ENCODE measurements at regions of chr10 and their contacts with region 1.

Region 1: GRCh38 chr10:102072673-102073527 is 7.8 kb downstream of the HPS6 start:
- DNase-seq: peak; percentile 85
- ATAC-seq: peak; percentile 95
- H3K4me3 Mint-ChIP-seq: no peak overlapping the region
- H3K27ac Mint-ChIP-seq: no peak overlapping the region
- H3K4me1 Mint-ChIP-seq: no peaks in the 10 kb centered on the region
- H3K27me3 Mint-ChIP-seq: peaks cover 3% of the 10 kb centered on the region
- CTCF ChIP-seq: peak; percentile 94

Region 2: GRCh38 chr10:101848894-101849351 is 224.0 kb before region 1 on chr10:
- CTCF ChIA-PET with region 1: interaction called, 13 read pairs
- POLR2A ChIA-PET with region 1: no interaction called
- DNase-seq: no peak
- ATAC-seq: peak; percentile 62
- H3K4me3 Mint-ChIP-seq: no peak overlapping the region
- H3K27ac Mint-ChIP-seq: peak overlapping the region; percentile 65; the same call in 1 of the 2 replicates
- H3K4me1 Mint-ChIP-seq: peaks cover 33% of the 10 kb centered on the region
- H3K27me3 Mint-ChIP-seq: no peaks in the 10 kb centered on the region
- CTCF ChIP-seq: no peak

Region 3: GRCh38 chr10:102055647-102056419 is 17.1 kb before region 1 on chr10 and contains the start of gene ARMH3:
- CTCF ChIA-PET with region 1: interaction called, 39 read pairs
- POLR2A ChIA-PET with region 1: no interaction called
- DNase-seq: peak; percentile 93
- ATAC-seq: peak; percentile 94
- H3K4me3 Mint-ChIP-seq: peak within 1 kb of the TSS; percentile 95
- H3K27ac Mint-ChIP-seq: peak within 1 kb of the TSS; percentile 95
- H3K4me1 Mint-ChIP-seq: peaks cover 19% of the 10 kb centered on the region
- H3K27me3 Mint-ChIP-seq: no peaks in the 10 kb centered on the region; the same call in none of the 2 replicates
- CTCF ChIP-seq: no peak
- total RNA-seq, gene ARMH3: 16.0 to 17.9 TPM (median 17.1 TPM) in 3 replicates

Region 4: DNA sequence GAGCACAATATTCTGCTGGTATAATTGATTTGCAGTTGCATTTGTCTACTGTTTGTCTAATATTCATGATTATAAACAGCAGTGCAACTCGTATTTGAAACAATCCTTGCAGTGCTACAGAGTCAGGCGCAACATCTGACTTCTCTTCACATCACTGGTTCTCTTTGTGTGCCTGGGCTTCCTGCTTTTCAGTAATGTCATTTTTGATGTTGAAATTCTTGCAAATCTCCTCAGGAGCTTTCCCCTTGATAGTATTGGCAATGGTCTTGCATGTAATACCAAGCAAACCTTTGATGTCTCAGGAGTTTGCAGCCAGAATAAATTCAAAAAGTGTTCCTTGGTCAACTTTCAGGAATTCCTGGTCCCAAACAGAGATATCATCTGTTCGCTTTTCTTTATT is 12.4 kb after region 1 on chr10:
- CTCF ChIA-PET with region 1: interaction called, 23 read pairs
- POLR2A ChIA-PET with region 1: no interaction called
- DNase-seq: no peak
- ATAC-seq: no peak
- H3K4me3 Mint-ChIP-seq: no peak overlapping the region
- H3K27ac Mint-ChIP-seq: no peak overlapping the region
- H3K4me1 Mint-ChIP-seq: peaks cover 2% of the 10 kb centered on the region; the same call in 1 of the 2 replicates
- H3K27me3 Mint-ChIP-seq: no peaks in the 10 kb centered on the region
- CTCF ChIP-seq: no peak

Region 5: GRCh38 chr10:102101152-102101551 is 28.3 kb after region 1 on chr10:
- CTCF ChIA-PET with region 1: interaction called, 13 read pairs
- POLR2A ChIA-PET with region 1: no interaction called
- DNase-seq: no peak
- ATAC-seq: peak; percentile 76
- H3K4me3 Mint-ChIP-seq: no peak overlapping the region
- H3K27ac Mint-ChIP-seq: no peak overlapping the region
- H3K4me1 Mint-ChIP-seq: no peaks in the 10 kb centered on the region
- H3K27me3 Mint-ChIP-seq: no peaks in the 10 kb centered on the region
- CTCF ChIP-seq: no peak

Region 6: DNA sequence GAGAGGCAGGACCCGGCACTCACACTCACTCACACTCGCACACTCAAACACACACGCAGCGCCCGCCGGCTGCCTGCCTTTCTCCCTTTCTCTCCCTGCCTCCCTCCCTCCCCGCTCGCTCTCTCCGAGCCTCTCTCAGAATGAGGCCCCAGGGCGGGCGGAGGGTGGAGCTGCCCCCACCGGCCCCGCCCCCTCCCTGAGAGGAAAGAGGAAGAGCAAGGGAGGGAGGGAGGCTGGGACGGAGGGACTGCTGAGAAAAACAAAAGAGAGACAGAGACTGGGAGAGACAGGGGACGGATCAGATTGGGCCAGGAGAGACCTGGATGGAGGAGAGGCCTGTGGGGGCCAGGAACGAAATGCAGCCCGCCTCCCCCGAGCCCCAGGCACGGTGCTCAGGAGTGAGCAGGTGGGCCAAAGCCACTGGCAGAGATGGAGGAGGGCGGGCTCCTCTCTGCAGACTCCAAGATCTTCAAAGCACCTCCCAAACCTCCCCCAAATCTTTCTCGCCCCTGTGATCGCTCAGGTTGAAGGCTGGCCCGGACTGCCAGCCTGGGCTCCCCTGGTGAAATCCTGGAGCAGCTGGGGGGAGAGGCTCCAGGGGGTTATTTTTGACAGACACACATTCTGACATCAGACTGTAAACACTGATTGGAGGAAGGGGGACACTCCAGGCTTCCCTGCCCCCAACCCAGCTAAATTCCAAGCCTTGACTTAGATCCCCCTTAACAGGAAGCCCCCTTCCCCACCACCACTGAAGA is 42.1 kb after region 1 on chr10:
- CTCF ChIA-PET with region 1: interaction called, 16 read pairs
- POLR2A ChIA-PET with region 1: no interaction called
- DNase-seq: peak; percentile 91
- ATAC-seq: peak; percentile 60
- H3K4me3 Mint-ChIP-seq: peak overlapping the region; percentile 88
- H3K27ac Mint-ChIP-seq: peak overlapping the region; percentile 93
- H3K4me1 Mint-ChIP-seq: peaks cover 67% of the 10 kb centered on the region
- H3K27me3 Mint-ChIP-seq: no peaks in the 10 kb centered on the region
- CTCF ChIP-seq: no peak

Region 7: DNA sequence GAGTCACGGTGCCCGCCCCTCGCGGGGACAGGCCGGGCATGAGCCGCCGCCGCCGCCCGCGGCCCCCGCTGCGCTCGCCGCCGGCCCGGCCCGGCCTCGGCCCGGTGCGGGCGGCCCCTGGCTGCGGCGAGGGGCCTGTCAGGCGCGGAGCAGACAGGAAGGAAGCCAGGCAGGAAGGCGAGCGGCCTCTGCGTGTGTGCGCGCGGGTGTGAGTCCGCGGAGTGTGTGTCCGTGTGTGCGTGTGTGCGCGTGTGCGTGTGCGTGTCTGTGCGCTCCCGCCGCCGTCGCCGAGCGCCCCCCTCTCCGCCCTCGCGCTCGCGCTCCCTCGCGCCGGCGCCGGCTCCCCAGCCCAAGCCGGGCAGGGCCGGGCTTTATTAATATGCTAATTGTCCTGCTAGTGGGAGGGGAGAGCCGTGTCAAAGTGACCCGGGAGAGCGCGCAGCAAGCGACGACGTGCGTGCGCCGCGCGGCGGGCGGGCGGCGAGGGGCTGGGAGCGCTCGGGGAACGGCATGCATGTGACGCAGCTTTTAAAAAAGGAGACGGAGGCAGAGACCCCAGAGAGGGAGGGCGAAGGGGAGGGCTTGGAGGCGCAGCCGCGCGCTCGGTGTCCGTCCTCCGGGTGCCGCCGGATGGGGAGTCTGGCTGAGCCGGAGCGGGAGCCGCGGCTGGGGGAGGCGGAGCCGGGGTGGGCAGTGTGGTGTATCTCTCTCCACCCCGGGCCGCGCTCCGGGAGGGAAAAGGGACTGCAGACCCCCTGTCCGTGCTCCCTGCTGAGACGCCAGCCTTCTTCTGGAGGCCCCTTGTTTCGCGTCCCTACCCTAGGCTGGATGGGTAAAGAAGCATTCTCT is 47.5 kb after region 1 on chr10 and contains the start of gene LDB1:
- CTCF ChIA-PET with region 1: interaction called, 13 read pairs
- POLR2A ChIA-PET with region 1: no interaction called
- DNase-seq: peak; percentile 75
- ATAC-seq: peak; percentile 9
- H3K4me3 Mint-ChIP-seq: peak within 1 kb of the TSS; percentile 84
- H3K27ac Mint-ChIP-seq: peak within 1 kb of the TSS; percentile 98
- H3K4me1 Mint-ChIP-seq: peaks cover 62% of the 10 kb centered on the region
- H3K27me3 Mint-ChIP-seq: no peaks in the 10 kb centered on the region
- CTCF ChIP-seq: no peak
- total RNA-seq, gene LDB1: 89.1 to 100 TPM (median 94.2 TPM) in 3 replicates

Region 8: GRCh38 chr10:102151774-102152544 is 79.1 kb after region 1 on chr10 and contains the start of gene NOLC1:
- CTCF ChIA-PET with region 1: no interaction called
- POLR2A ChIA-PET with region 1: no interaction called
- DNase-seq: peak; percentile 100
- ATAC-seq: peak; percentile 95
- H3K4me3 Mint-ChIP-seq: peak within 1 kb of the TSS; percentile 98
- H3K27ac Mint-ChIP-seq: peak within 1 kb of the TSS; percentile 99
- H3K4me1 Mint-ChIP-seq: peaks cover 24% of the 10 kb centered on the region
- H3K27me3 Mint-ChIP-seq: no peaks in the 10 kb centered on the region
- CTCF ChIP-seq: no peak
- total RNA-seq, gene NOLC1: 125 to 165 TPM (median 129 TPM) in 3 replicates

Region 9: GRCh38 chr10:102280397-102281101 is 207.6 kb after region 1 on chr10:
- CTCF ChIA-PET with region 1: no interaction called
- POLR2A ChIA-PET with region 1: no interaction called
- DNase-seq: no peak
- ATAC-seq: no peak
- H3K4me3 Mint-ChIP-seq: no peak overlapping the region
- H3K27ac Mint-ChIP-seq: no peak overlapping the region
- H3K4me1 Mint-ChIP-seq: no peaks in the 10 kb centered on the region
- H3K27me3 Mint-ChIP-seq: no peaks in the 10 kb centered on the region
- CTCF ChIP-seq: no peak

Region 10: GRCh38 chr10:102358712-102359382 is 285.9 kb after region 1 on chr10:
- CTCF ChIA-PET with region 1: no interaction called
- POLR2A ChIA-PET with region 1: no interaction called
- DNase-seq: no peak
- ATAC-seq: no peak
- H3K4me3 Mint-ChIP-seq: no peak overlapping the region
- H3K27ac Mint-ChIP-seq: no peak overlapping the region
- H3K4me1 Mint-ChIP-seq: no peaks in the 10 kb centered on the region
- H3K27me3 Mint-ChIP-seq: no peaks in the 10 kb centered on the region
- CTCF ChIP-seq: no peak

Measured in WTC11 (cell line).